AG04450 (cell line): ENCODE measurements at regions of chr5 and their contacts with region 1.

Region 1: DNA sequence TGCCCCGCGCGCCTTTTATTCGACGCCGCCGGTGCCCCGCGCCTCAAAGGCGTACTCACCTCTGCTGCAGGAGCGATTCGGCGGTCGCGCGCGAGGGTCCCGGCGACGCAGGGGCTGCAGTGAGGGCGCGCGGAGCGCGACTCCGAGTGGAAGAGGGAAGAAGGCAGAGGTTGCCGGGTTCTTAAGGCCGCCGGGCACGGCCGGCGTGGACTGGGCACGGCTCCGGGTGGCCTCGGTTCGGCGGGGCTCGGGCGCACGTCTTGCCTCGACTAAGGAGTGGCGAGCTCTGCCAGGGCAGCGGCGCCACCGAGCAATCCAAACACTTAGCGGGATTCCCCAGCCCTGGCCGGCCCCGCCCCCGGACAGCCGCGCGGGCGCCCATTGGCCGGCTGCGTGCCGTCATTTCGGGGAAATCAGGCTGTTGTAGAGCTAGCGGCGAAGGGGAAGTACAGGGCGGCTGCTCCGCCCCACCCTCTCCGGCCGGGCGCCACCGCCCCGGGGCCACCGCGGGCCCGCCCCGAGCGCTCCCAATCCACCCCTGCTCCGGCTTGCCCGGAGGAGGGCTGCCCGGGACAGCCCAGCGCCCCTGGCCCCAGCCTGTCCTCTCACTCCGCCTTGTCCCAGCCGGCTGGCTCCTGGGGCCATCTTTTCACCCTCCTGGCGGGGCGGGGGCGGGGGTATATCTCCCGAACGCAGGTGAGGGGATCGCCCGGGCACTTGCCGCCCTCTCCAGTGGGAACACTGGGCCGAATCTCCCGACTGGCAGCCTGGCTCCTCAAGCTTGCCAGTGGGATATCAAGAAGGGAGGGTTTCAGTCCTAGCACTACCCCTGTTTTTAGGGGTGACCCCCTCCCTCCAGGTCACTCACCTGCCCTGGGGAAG is at the start of gene IRF1:
- DNase-seq: peak; percentile 84
- H3K4me3 ChIP-seq: peak within 1 kb of the TSS; percentile 97
- H3K27ac ChIP-seq: peak within 1 kb of the TSS; percentile 81
- H3K27me3 ChIP-seq: no peaks in the 10 kb centered on the region
- CTCF ChIP-seq: no peak
- polyA plus RNA-seq, gene IRF1: 22.6 and 30.0 TPM in 2 replicates

Region 2: GRCh38 chr5:132426525-132427138 is 64.1 kb before region 1 on chr5:
- CTCF ChIA-PET with region 1: no interaction called
- POLR2A ChIA-PET with region 1: interaction called, 20 read pairs
- DNase-seq: peak; percentile 80
- H3K4me3 ChIP-seq: 0 out of 2 replicates have a peak overlapping the region, but pooled peaks have one; percentile 13
- H3K27ac ChIP-seq: peak overlapping the region; percentile 98
- H3K27me3 ChIP-seq: no peaks in the 10 kb centered on the region
- CTCF ChIP-seq: peak; percentile 54

Region 3: GRCh38 chr5:132437604-132438266 is 53.0 kb before region 1 on chr5:
- CTCF ChIA-PET with region 1: interaction called, 3 read pairs
- POLR2A ChIA-PET with region 1: interaction called, 16 read pairs
- DNase-seq: peak; percentile 89
- H3K4me3 ChIP-seq: no peak overlapping the region
- H3K27ac ChIP-seq: peak overlapping the region; percentile 88
- H3K27me3 ChIP-seq: no peaks in the 10 kb centered on the region
- CTCF ChIP-seq: no peak

Region 4: GRCh38 chr5:132456296-132457001 is 34.3 kb before region 1 on chr5:
- CTCF ChIA-PET with region 1: no interaction called
- POLR2A ChIA-PET with region 1: interaction called, 28 read pairs
- DNase-seq: no peak
- H3K4me3 ChIP-seq: no peak overlapping the region
- H3K27ac ChIP-seq: peak overlapping the region; percentile 90
- H3K27me3 ChIP-seq: no peaks in the 10 kb centered on the region
- CTCF ChIP-seq: no peak

Region 5: GRCh38 chr5:132466433-132467286 is 24.1 kb before region 1 on chr5:
- CTCF ChIA-PET with region 1: interaction called, 4 read pairs
- POLR2A ChIA-PET with region 1: interaction called, 24 read pairs
- DNase-seq: no peak
- H3K4me3 ChIP-seq: no peak overlapping the region
- H3K27ac ChIP-seq: no peak overlapping the region
- H3K27me3 ChIP-seq: no peaks in the 10 kb centered on the region
- CTCF ChIP-seq: no peak

Region 6: DNA sequence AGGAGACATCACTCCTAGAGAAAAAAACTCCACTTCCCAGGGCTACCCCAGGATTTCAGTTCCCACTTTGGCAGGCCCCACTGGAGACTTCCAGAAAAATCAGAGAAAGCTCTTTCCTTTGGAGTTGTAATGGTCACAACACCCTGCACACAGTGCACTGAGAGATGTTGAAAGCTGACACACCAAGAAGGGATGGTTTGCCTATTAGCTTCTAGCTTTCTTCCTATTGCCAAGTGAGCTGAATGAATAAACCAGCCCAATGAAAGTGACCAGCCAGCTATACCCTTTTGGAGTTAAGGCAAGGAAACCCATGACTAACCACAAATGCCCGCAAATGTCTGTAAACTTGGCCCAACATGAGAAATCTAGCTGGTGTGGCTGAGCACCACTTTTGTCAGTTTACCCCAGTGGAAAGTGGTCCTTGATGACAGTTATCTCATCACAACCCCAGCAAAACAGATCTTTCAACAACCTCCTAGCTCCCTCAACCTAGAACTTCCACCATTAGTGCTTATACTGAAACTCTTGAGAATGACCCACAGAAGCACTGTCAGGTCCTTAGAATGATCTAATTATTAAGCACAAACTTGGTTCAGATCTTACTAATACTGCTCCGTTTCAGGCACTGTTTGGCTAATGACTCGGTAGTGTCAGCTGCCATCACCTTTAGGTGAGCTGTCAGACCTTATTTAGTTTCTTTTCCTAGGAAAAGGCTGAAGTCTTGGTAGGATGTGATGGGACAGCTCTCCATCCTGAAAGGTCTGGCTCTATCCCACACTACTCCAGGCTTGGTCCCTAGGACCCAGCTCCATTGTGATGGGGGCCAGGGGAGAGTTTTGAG is 11.4 kb before region 1 on chr5:
- CTCF ChIA-PET with region 1: interaction called, 9 read pairs
- POLR2A ChIA-PET with region 1: interaction called, 16 read pairs
- DNase-seq: no peak
- H3K4me3 ChIP-seq: no peak overlapping the region
- H3K27ac ChIP-seq: no peak overlapping the region
- H3K27me3 ChIP-seq: no peaks in the 10 kb centered on the region
- CTCF ChIP-seq: no peak

Region 7: DNA sequence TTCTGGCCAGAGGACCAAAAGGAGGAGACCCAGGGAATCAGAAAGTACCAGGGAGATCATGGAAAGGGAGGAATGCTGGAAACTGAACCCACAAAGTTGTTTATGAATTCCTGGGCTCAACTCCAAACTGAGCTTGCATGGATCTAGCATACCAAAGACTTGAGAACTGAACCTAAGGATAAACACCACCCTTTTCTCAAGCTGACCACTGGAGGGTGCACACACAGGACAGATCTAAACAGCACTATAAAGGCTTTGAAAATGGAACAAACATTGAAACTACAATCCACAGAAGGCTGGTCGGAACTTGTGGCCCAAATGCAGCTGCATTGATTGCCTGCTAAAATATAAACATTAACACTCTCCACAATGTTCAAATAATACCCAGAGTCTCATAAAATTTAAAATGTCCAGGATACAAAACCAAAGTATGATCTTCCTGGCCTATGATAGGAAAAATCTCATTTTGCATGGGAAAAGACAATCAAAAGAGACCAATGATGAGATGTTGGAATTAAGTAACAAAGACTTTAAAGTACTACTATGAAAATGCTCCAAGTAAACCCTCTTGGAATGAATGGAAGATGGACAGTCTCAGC is 15.5 kb after region 1 on chr5:
- CTCF ChIA-PET with region 1: interaction called, 6 read pairs
- POLR2A ChIA-PET with region 1: interaction called, 30 read pairs
- DNase-seq: peak; percentile 96
- H3K4me3 ChIP-seq: peak overlapping the region; percentile 20
- H3K27ac ChIP-seq: peak overlapping the region; percentile 98
- H3K27me3 ChIP-seq: no peaks in the 10 kb centered on the region
- CTCF ChIP-seq: peak; percentile 85

Region 8: GRCh38 chr5:132674671-132675506 is 184.2 kb after region 1 on chr5:
- CTCF ChIA-PET with region 1: no interaction called
- POLR2A ChIA-PET with region 1: no interaction called
- DNase-seq: peak; percentile 91
- H3K4me3 ChIP-seq: no peak overlapping the region
- H3K27ac ChIP-seq: peak overlapping the region; percentile 95
- H3K27me3 ChIP-seq: no peaks in the 10 kb centered on the region
- CTCF ChIP-seq: no peak